ENCODE measurements at regions of chr4 and their contacts with region 1.

Region 1: DNA sequence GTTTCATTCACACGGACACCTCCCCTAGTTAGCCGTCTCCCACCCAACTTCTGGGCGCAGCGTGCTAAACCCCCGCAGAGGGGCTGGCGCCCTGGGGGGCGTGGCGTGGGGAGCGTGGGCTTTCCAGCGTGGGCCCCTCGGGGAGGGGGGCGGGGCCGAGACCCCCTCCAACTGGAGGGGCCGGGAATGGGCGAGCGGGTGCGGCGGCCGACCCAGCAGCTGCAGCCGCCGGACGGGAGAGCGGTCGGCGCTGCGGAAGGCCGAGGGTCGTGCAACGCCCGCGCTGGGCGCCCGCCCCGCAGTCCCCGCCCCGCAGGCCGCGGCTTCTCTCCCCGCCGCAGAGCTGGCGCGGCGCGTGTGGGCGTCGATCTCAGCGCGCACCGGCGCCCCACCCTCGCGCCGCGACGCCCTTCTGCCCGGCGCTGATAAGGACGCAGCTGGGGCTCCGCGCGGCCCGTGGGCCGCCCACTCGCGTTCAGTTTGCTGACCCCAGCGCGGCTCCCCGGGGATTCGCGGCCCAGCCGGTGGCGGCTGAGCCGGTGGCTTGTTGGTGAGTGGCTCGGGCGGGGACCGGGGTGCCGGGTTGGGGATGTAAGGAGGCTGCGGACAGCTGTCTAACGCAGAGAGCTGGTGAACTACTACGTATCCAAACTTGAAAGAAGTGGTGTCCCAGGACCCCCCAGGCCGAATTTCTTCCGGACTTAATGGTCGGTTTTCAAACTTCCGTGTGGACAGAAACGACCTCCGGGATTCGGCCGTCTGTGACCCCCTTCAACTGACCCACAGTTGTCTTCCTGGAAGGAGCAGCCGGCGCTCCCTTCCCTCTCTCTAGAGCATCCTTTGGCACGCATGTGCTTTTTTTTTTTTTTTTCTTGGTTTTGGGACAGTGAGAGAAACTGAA is 1.5 kb downstream of the FHDC1 start:
- DNase-seq: peak in 3 of 10 donors; percentile 16 to 53 (median 32)
- H3K4me3 ChIP-seq: peak overlapping the region; percentile 44 to 85 (median 71)
- H3K27ac ChIP-seq: peak overlapping the region in 2 of 59 donors; percentile 9 to 44
- H3K27me3 ChIP-seq: peaks cover 0 to 14% (median 0%) of the 10 kb centered on the region in 45 donors
- CTCF ChIP-seq: no peak

Region 2: DNA sequence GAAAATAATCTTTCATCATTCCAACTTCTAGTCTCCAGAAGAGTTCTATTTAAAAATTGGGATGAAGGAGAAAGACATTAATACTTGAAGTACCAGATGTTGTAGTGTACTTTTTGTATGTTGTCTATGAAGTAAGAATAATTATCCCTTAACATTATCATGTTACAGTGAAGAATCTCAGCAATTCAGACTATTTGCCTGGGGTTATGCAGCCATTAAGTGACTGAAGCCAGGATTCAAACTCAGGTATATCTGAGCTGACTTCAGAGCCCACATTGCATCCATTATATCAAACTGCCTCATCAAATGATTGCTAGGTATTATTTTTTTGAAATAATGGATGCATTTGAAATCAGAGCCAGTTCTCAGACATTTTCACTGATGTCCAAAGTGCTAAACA is 77.5 kb before region 1 on chr4:
- intact Hi-C with region 1: no loop called
- DNase-seq: no peak
- H3K4me3 ChIP-seq: no peak overlapping the region
- H3K27ac ChIP-seq: no peak overlapping the region
- H3K27me3 ChIP-seq: no peaks in the 10 kb centered on the region
- CTCF ChIP-seq: no peak

Region 3: DNA sequence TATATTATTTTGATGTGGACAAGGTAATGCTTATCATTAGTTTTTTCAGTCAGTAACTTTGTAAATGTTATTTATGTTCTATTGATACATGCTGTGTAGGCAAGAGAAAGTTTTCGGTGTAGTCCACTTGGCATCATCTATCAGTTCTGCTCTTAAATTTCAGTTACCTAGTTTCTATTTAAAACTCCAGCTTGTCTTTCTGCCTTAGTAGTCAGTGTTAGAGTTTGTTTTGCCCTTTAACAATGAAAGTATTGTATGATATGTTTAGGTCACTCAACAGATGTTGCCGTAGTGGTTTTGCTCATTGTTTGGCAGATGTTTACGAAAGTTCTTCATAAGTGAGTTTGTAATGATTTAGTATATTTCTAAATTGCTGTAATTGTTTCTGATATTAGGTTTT is 36.4 kb before region 1 on chr4:
- intact Hi-C with region 1: loop called in 1 of 2 experiments (anchors 5 kb)
- DNase-seq: no peak
- H3K4me3 ChIP-seq: peak overlapping the region in 6 of 59 donors; percentile 0 to 32 (median 9)
- H3K27ac ChIP-seq: peak overlapping the region in 7 of 59 donors; percentile 1 to 43 (median 21)
- H3K27me3 ChIP-seq: no peaks in the 10 kb centered on the region
- CTCF ChIP-seq: no peak

Measured in dorsolateral prefrontal cortex (tissue), 120 donors.